ENCODE measurements at regions of chr10 and their contacts with region 1.

Region 1: DNA sequence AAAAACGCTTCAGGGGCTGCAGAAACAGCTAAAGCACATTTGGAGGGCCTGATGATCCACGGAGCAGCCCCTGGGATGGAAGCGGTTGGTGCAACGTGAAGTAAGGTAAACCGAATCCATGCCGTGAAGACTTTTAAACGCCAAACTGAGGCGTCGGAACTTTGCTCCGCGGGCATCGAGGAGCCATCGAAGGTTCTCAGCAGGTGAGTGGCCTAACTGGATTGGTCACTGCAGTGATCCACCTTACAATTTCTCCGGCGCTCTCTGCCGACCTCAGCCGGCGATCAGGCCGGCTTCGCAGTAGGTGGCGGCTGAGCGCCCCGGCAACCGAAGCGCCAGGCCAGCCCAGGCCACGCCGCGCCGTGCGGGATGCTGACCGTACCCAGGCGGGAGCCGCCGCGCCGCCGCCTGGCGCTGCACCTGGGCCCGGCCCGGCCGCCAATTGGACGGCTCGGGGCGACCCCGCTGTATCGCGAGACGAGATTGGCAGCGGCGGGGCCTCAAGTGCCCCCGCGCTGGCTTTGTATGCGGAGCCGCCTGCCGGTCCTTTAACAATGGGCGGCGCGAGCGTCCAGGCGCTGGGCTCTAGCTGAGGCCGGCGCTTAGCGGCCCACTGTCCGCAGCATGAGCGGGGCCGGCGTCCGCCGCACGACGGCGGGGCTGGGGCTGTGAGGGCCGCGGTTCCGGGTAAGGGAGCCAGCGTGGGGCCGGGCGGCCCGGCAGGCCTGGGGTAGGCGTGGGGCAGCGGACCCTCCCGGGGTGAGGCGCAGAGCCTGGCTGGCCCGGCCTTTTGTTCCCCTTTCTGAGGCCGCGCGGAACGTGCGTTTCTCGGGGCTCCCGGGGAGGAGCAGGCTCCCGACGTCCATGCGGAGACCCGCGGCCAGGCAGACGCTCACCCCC is at the start of gene CCNJ:
- DNase-seq: peak; percentile 64 to 91 (median 77)
- ATAC-seq: peak; percentile 84
- H3K4me3 ChIP-seq: peak within 1 kb of the TSS; percentile 98
- H3K4me3 Mint-ChIP-seq: peak within 1 kb of the TSS; percentile 95
- H3K27ac ChIP-seq: peak within 1 kb of the TSS; percentile 52 to 59
- H3K27ac Mint-ChIP-seq: peak within 1 kb of the TSS; percentile 80
- H3K4me1 ChIP-seq: peaks cover 21% of the 10 kb centered on the region
- H3K4me1 Mint-ChIP-seq: peaks cover 54% of the 10 kb centered on the region
- H3K27me3 ChIP-seq: peaks cover 4 to 5% of the 10 kb centered on the region in 2 experiments
- H3K27me3 Mint-ChIP-seq: peaks cover 8% of the 10 kb centered on the region
- CTCF ChIP-seq: no peak
- total RNA-seq, gene CCNJ: 6.9 to 8.0 TPM

Region 2: GRCh38 chr10:95656291-95657164 is 386.8 kb before region 1 on chr10 and contains the start of gene ALDH18A1:
- CTCF ChIA-PET with region 1: no interaction called
- POLR2A ChIA-PET with region 1: interaction called, 3 read pairs
- intact Hi-C with region 1: loop called in 1 of 2 experiments (anchors 10 kb)
- DNase-seq: peak; percentile 79 to 95 (median 90)
- ATAC-seq: peak; percentile 90
- H3K4me3 ChIP-seq: peak within 1 kb of the TSS; percentile 70
- H3K4me3 Mint-ChIP-seq: peak within 1 kb of the TSS; percentile 100
- H3K27ac ChIP-seq: peak within 1 kb of the TSS in 1 of 2 donors; percentile 16
- H3K27ac Mint-ChIP-seq: peak within 1 kb of the TSS; percentile 86
- H3K4me1 ChIP-seq: peaks cover 18% of the 10 kb centered on the region
- H3K4me1 Mint-ChIP-seq: peaks cover 39% of the 10 kb centered on the region
- H3K27me3 ChIP-seq: no peaks in the 10 kb centered on the region
- H3K27me3 Mint-ChIP-seq: no peaks in the 10 kb centered on the region
- CTCF ChIP-seq: no peak
- total RNA-seq, gene ALDH18A1: 9.6 to 12.6 TPM

Region 3: GRCh38 chr10:95688648-95689047 is 354.6 kb before region 1 on chr10:
- CTCF ChIA-PET with region 1: interaction called, 4 read pairs
- POLR2A ChIA-PET with region 1: interaction called, 5 read pairs
- intact Hi-C with region 1: loop called (anchors 2 to 5 kb)
- DNase-seq: no peak
- ATAC-seq: no peak
- H3K4me3 ChIP-seq: no peak overlapping the region
- H3K4me3 Mint-ChIP-seq: no peak overlapping the region
- H3K27ac ChIP-seq: no peak overlapping the region
- H3K27ac Mint-ChIP-seq: no peak overlapping the region
- H3K4me1 ChIP-seq: peaks cover 15% of the 10 kb centered on the region
- H3K4me1 Mint-ChIP-seq: peaks cover 39% of the 10 kb centered on the region
- H3K27me3 ChIP-seq: no peaks in the 10 kb centered on the region
- H3K27me3 Mint-ChIP-seq: no peaks in the 10 kb centered on the region
- CTCF ChIP-seq: no peak

Region 4: DNA sequence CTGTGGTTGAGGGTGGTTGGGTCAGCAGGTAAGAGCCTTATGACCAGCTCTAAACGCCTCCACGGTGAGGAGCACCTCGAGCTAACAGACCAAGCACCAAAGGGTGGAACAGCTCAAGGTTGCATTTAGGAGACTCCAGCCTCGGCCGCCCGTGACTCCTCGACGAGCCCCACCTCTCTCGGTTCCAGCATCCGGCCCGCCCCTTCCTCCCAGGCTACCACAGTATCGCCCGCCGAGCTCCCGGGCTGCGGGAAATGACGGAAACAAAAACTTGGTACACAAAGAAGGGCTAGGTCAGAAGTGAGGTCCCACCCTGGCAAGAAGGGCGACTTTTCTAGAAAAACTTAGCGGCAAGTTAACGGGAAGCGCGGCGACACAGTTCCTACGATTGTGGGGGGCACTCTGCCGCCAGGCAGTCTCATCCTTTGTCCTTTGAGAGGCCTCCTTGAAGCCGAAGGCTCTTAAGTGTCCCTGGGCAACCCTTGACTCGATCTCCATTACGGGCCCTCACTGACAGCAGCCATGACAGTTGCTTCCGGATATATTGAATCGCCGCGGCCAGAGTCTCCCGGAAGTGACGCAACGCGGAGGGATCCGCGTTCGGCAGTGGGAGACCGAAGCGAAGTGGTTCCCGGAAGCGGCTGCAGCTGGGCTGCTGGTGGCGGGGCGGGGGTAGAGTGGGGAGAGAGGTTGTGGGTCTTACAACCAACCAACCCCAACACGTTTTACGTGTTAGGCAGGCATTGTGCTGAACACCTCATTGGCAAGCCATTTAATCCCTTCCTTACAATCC is 46.6 kb after region 1 on chr10:
- CTCF ChIA-PET with region 1: no interaction called
- POLR2A ChIA-PET with region 1: interaction called, 21 read pairs
- intact Hi-C with region 1: loop called (anchors 1 kb)
- DNase-seq: peak; percentile 86 to 97 (median 90)
- ATAC-seq: peak; percentile 84
- H3K4me3 ChIP-seq: peak overlapping the region; percentile 78
- H3K4me3 Mint-ChIP-seq: peak overlapping the region; percentile 93
- H3K27ac ChIP-seq: peak overlapping the region; percentile 90 to 97
- H3K27ac Mint-ChIP-seq: peak overlapping the region; percentile 98
- H3K4me1 ChIP-seq: peaks cover 13% of the 10 kb centered on the region
- H3K4me1 Mint-ChIP-seq: peaks cover 16% of the 10 kb centered on the region
- H3K27me3 ChIP-seq: peaks cover 14 to 28% of the 10 kb centered on the region in 2 experiments
- H3K27me3 Mint-ChIP-seq: peaks cover 43% of the 10 kb centered on the region
- CTCF ChIP-seq: no peak

Region 5: DNA sequence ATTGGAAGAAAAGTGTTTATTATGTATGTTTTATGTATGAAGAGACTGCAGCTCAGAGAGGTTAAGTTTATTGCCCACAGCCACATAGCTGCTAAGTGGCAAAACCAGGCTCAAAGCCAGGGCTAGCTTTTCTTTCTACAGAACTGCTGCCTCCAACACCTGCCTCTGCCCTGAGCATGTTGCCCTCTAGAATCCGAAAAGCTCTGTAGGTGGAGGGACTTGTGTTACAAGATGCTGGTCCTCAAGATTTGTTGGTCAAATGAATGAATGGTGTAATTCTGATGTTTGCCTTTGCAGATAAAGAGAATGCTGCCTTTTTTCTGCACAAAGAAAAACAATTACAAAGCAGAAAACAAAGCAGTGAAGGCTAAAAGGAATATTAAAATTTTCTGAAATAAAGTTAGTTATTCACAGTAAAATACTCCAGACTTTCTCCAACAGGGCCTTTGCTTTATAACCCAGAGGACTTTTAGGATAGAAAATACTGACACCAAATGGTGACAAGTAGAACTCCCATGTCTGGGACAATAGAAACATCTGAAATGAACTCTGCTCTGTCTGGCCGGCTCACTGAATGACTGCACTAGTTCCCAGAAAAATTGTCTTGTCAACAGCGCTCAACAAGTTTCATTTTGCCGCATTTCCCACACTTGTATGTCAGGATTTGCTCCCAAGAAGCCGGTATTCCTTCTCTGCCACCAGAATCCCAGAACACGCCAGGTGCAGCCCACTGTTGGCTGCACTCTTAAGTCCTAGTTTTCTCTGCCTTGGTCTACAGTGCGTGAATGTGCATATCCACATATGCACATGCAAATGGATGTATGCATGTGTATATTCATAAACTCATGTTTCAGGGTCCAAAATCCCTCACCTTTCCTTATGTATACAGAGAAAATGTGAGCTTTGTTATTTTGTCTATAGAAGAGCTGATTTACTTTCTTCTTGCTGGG is 250.0 kb after region 1 on chr10:
- CTCF ChIA-PET with region 1: no interaction called
- POLR2A ChIA-PET with region 1: no interaction called
- intact Hi-C with region 1: loop called in 1 of 2 experiments (anchors 10 kb)
- DNase-seq: peak in 6 of 14 experiments; percentile 2 to 52 (median 24)
- ATAC-seq: no peak
- H3K4me3 ChIP-seq: no peak overlapping the region
- H3K4me3 Mint-ChIP-seq: no peak overlapping the region
- H3K27ac ChIP-seq: no peak overlapping the region
- H3K27ac Mint-ChIP-seq: peak overlapping the region; percentile 5
- H3K4me1 ChIP-seq: peaks cover 7% of the 10 kb centered on the region
- H3K4me1 Mint-ChIP-seq: peaks cover 34% of the 10 kb centered on the region
- H3K27me3 ChIP-seq: no peaks in the 10 kb centered on the region
- H3K27me3 Mint-ChIP-seq: no peaks in the 10 kb centered on the region
- CTCF ChIP-seq: peak; percentile 48

Measured in CD4-positive, alpha-beta T cell (primary cell).